Activated B cell treated with CpG ODN at 0.5 μM for 24 hours (primary cell): ENCODE measurements at regions of chr16 and their contacts with region 1.

Region 1: DNA sequence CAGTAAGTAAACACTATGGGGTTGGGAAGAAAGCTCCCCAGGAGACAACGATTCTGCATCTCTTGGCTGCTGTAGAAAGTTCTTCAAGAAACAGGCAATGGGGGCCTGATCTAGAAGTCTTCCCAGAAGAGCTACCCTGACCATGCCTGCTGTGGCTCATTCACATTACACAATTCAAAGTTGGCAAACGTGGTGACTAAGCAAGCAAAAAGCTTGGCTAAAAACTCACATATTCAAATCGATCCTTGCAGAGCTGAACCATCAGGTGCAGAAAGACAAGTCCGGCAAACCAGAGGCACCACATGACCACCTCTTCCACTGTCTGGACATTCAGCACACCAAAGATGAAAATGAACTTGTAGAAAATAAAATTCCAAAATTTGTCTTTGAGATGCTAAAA is 16.1 kb downstream of the AMFR start:
- DNase-seq: no peak
- ATAC-seq: no peak
- H3K4me3 Mint-ChIP-seq: no peak overlapping the region
- H3K27ac Mint-ChIP-seq: no peak overlapping the region
- H3K4me1 Mint-ChIP-seq: peaks cover 7% of the 10 kb centered on the region
- H3K27me3 Mint-ChIP-seq: no peaks in the 10 kb centered on the region
- CTCF ChIP-seq: no peak

Region 2: DNA sequence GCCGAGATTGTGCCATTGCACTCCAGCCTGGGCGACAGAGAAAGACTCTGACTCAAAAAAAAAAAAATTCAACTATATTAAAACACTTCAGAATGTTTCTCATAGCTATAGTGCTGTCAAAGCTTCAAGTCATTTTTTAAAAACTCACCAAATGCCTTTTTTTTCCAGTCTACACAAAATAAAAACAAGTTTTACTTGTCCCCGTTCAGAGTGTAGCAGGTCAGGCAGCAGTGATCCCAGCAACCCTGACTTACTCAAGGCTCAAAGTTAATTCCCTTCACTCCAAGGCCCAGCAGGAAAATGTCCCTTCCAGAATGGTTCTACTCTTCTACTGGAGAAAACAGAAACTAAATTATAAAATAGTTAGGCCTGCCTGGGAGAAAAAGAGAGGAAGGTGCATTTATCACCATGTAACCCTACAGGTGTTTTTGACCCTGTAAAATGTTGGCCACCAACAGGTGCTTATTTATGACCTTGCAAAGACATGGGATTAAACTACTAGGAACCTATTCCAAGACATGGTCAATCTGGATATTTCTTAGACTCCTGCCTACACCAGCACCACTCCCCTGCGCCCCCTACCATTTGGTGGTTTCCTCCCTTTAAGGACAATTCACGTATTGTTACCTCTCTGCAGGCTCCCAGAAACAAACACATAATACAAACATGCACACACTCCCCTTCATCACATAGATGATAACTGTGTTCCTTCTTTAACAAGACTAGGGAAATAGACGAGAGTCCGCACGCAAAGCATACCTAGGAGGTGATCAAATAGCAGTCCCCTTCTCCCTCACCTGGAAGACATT is 10.7 kb after region 1 on chr16:
- CTCF ChIA-PET with region 1: no interaction called
- POLR2A ChIA-PET with region 1: interaction called, 10 read pairs
- intact Hi-C with region 1: loop called (anchors 1 kb)
- DNase-seq: no peak
- ATAC-seq: no peak
- H3K4me3 Mint-ChIP-seq: peak overlapping the region; percentile 59
- H3K27ac Mint-ChIP-seq: peak overlapping the region; percentile 95
- H3K4me1 Mint-ChIP-seq: peaks cover 85% of the 10 kb centered on the region
- H3K27me3 Mint-ChIP-seq: no peaks in the 10 kb centered on the region
- CTCF ChIP-seq: no peak

Region 3: GRCh38 chr16:56789360-56789759 is 380.2 kb after region 1 on chr16:
- CTCF ChIA-PET with region 1: no interaction called
- POLR2A ChIA-PET with region 1: no interaction called
- intact Hi-C with region 1: no loop called
- DNase-seq: no peak
- ATAC-seq: no peak
- H3K4me3 Mint-ChIP-seq: no peak overlapping the region
- H3K27ac Mint-ChIP-seq: no peak overlapping the region
- H3K4me1 Mint-ChIP-seq: peaks cover 2% of the 10 kb centered on the region
- H3K27me3 Mint-ChIP-seq: no peaks in the 10 kb centered on the region
- CTCF ChIP-seq: no peak